ENCODE measurements at regions of chr5 and their contacts with region 1.

Region 1: DNA sequence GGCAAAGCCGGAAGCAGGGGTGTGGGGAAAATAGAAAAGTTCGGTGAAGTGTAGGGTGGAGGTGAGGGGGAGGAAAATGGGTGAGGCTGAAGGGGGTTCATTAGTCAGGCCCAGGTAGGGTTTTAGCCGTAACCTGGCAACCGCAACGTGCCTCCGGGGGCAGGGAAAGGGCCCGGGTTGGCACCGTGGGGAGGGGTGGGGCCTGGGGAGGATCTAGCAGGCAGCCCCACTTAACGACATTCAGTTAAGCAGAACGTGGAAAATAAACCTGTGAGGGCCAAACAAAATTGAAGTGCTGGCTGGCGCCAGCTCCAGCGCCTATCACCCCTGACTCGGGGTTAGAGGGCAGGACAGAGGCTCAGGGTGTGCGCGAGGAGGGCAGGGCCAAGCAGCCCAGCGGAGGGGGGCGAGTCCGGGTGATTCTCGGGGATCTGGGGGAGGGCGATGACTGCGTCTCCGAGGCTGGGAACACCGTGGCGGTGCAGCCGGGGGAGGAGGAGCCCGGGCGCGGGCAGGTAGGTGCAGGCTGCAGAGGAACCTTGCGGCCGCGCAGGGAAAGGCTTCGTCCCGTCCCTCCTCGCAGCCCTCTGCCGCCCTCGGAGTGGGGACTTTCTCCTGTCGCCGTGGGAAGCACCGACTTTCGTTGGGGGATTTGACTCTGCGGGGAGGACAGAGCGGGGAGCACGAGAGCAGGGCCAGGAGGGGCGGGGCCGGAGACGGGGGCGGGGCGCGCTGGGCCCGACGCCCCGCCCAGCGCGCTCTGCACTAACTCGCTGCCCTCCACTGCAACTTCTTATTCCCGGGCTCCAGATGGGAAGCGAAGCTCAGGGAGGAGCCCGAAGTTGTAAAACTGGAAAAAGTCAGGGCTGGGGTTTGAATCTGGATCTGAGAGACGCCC is 5.1 kb downstream of the RGS14 start:
- DNase-seq: peak; percentile 34 to 88 (median 56)
- ATAC-seq: peak; percentile 75 to 79 (median 79)
- H3K4me3 ChIP-seq: peak overlapping the region; percentile 54 to 56
- H3K4me3 Mint-ChIP-seq: peak overlapping the region; percentile 77 to 82 (median 80)
- H3K27ac ChIP-seq: peak overlapping the region; percentile 74
- H3K27ac Mint-ChIP-seq: peak overlapping the region; percentile 95 to 96
- H3K4me1 ChIP-seq: peaks cover 45 to 90% of the 10 kb centered on the region in 2 experiments
- H3K4me1 Mint-ChIP-seq: peaks cover 46 to 75% (median 68%) of the 10 kb centered on the region in 3 donors
- H3K27me3 ChIP-seq: no peaks in the 10 kb centered on the region
- H3K27me3 Mint-ChIP-seq: no peaks in the 10 kb centered on the region

Region 2: GRCh38 chr5:177311723-177312648 is 50.9 kb before region 1 on chr5 and contains the start of gene MXD3:
- CTCF ChIA-PET with region 1: interaction called in 1 of 2 experiments, 3 read pairs
- POLR2A ChIA-PET with region 1: interaction called in 1 of 2 experiments, 14 read pairs
- DNase-seq: peak; percentile 80 to 96 (median 92)
- ATAC-seq: peak; percentile 91 to 94 (median 92)
- H3K4me3 ChIP-seq: peak within 1 kb of the TSS; percentile 65 to 73
- H3K4me3 Mint-ChIP-seq: peak within 1 kb of the TSS; percentile 71 to 90 (median 71)
- H3K27ac ChIP-seq: peak within 1 kb of the TSS; percentile 33
- H3K27ac Mint-ChIP-seq: peak within 1 kb of the TSS in 1 of 2 donors; percentile 28
- H3K4me1 ChIP-seq: peaks cover 14 to 57% of the 10 kb centered on the region in 2 experiments
- H3K4me1 Mint-ChIP-seq: peaks cover 14 to 41% (median 27%) of the 10 kb centered on the region in 3 donors
- H3K27me3 ChIP-seq: peaks cover 0 to 14% of the 10 kb centered on the region in 2 experiments
- H3K27me3 Mint-ChIP-seq: peaks cover 0 to 4% of the 10 kb centered on the region in 2 donors
- total RNA-seq, gene MXD3: 9.3 to 15.2 (median 12.4) TPM